ENCODE measurements at regions of chr18 and their contacts with region 1.

Region 1: GRCh38 chr18:45384137-45384961 is 230.9 kb upstream of the SLC14A2 start:
- DNase-seq: peak; percentile 48
- H3K4me3 ChIP-seq: no peak overlapping the region
- H3K27ac ChIP-seq: no peak overlapping the region
- H3K4me1 ChIP-seq: no peaks in the 10 kb centered on the region
- H3K27me3 ChIP-seq: no peaks in the 10 kb centered on the region
- CTCF ChIP-seq: peak; percentile 53 to 80

Region 2: GRCh38 chr18:43620936-43621335 is 1763.4 kb before region 1 on chr18:
- CTCF ChIA-PET with region 1: no interaction called
- dilution Hi-C with region 1: no loop called
- in situ Hi-C with region 1: no loop called
- intact Hi-C with region 1: loop called (anchors 10 kb)
- DNase-seq: peak; percentile 20
- H3K4me3 ChIP-seq: no peak overlapping the region
- H3K27ac ChIP-seq: no peak overlapping the region
- H3K4me1 ChIP-seq: no peaks in the 10 kb centered on the region
- H3K27me3 ChIP-seq: peaks cover 3% of the 10 kb centered on the region
- CTCF ChIP-seq: peak; percentile 37 to 52

Region 3: GRCh38 chr18:44901283-44901682 is 483.1 kb before region 1 on chr18:
- CTCF ChIA-PET with region 1: no interaction called
- dilution Hi-C with region 1: no loop called
- in situ Hi-C with region 1: no loop called
- intact Hi-C with region 1: loop called (anchors 2 kb)
- DNase-seq: no peak
- H3K4me3 ChIP-seq: no peak overlapping the region
- H3K27ac ChIP-seq: no peak overlapping the region
- H3K4me1 ChIP-seq: peaks cover 14% of the 10 kb centered on the region
- H3K27me3 ChIP-seq: no peaks in the 10 kb centered on the region
- CTCF ChIP-seq: peak; percentile 25 to 40

Region 4: DNA sequence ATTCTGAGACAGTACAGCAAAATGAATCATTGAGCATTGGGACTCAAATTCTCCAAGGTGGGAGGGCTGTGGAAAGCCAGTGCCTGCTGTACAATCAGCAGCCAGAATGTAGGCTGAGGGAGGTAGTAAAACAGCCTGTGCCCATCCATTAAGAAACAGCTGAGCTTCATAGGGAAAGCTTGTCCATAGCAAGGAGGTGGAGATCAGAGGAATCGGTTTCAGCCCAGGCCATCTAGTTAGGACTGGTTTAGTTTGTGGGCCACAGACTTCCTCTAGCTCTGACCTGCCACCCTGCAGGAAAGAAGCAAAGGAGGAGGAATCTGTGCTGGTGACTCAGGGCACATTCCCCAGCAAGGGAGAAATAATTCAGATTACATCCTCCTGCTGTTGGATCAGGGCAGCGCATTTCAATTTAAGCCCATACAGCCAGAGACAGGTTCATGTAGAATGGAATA is 370.3 kb before region 1 on chr18:
- CTCF ChIA-PET with region 1: no interaction called
- dilution Hi-C with region 1: no loop called
- in situ Hi-C with region 1: no loop called
- intact Hi-C with region 1: loop called (anchors 5 kb)
- DNase-seq: peak; percentile 91
- H3K4me3 ChIP-seq: no peak overlapping the region
- H3K27ac ChIP-seq: no peak overlapping the region
- H3K4me1 ChIP-seq: peaks cover 48% of the 10 kb centered on the region
- H3K27me3 ChIP-seq: no peaks in the 10 kb centered on the region
- CTCF ChIP-seq: peak; percentile 30 to 42

Region 5: GRCh38 chr18:45275367-45276113 is 108.8 kb before region 1 on chr18:
- CTCF ChIA-PET with region 1: no interaction called
- dilution Hi-C with region 1: no loop called
- in situ Hi-C with region 1: loop called in 1 of 2 experiments (anchors 5 kb)
- intact Hi-C with region 1: loop called (anchors 1 kb)
- DNase-seq: peak; percentile 21
- H3K4me3 ChIP-seq: no peak overlapping the region
- H3K27ac ChIP-seq: no peak overlapping the region
- H3K4me1 ChIP-seq: no peaks in the 10 kb centered on the region
- H3K27me3 ChIP-seq: peaks cover 3% of the 10 kb centered on the region
- CTCF ChIP-seq: peak; percentile 82 to 94

Region 6: GRCh38 chr18:45441110-45441842 is 56.9 kb after region 1 on chr18:
- CTCF ChIA-PET with region 1: interaction called, 4 read pairs
- dilution Hi-C with region 1: no loop called
- in situ Hi-C with region 1: no loop called
- intact Hi-C with region 1: loop called (anchors 1 kb)
- DNase-seq: peak; percentile 53
- H3K4me3 ChIP-seq: no peak overlapping the region
- H3K27ac ChIP-seq: no peak overlapping the region
- H3K4me1 ChIP-seq: peaks cover 15% of the 10 kb centered on the region
- H3K27me3 ChIP-seq: no peaks in the 10 kb centered on the region
- CTCF ChIP-seq: peak; percentile 54 to 63

Measured in mammary epithelial cell (primary cell).